Left lung (tissue), 14 donors: ENCODE measurements at regions of chr15 and their contacts with region 1.

Region 1: DNA sequence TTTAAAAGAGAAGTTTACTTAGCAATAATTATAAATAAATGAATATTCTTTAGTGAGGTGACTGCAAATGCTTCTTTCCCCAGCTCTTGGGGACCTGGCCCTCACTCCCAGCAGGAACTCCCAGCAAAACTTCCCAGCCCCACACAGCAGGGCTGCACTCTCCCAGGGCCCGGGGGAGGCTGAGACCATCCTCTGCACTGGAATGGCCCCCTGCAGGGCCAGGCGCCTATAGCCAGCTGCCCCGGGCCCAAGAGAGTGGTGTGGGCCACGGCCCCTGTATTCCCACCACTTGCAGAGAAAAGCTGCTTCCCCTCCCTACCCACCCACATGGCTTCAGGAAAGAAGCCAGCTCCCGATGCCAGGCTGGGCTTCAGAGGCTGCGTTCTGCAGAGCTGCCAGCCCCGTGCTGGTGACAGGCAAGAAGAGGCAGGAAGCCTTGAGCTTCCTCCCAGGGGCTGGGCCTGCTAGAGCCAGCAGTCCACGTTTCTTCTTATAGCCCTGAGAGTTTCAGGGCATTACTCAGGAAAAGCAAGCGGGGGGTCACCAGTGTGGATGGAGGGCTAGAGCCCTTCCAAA is 20.0 kb downstream of the IDH2 start:
- DNase-seq: no peak
- ATAC-seq: no peak
- H3K4me3 ChIP-seq: no peak overlapping the region
- H3K27ac ChIP-seq: peak overlapping the region in 1 of 2 donors; percentile 41
- H3K4me1 ChIP-seq: peaks cover 0 to 15% of the 10 kb centered on the region in 2 donors
- H3K27me3 ChIP-seq: no peaks in the 10 kb centered on the region
- CTCF ChIP-seq: no peak

Region 2: DNA sequence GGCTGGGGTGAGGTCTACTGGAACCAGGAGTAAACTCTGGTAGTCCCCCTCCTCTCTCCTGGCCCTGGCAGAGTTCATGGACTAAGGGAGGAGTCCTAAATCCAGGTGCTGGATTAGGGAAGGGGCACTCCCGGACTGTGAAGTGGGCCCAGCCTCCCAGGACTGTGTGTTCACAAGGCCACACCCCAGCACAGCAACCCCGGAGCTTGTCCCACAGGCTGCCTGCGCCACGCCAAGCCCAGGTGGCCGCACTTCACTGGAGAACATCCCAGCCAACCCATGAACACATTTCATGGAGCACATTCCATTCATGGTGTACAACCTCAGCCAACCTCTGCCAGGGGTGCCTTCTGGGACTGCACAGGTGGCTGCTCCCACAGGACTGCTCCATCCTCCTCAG is 177.7 kb before region 1 on chr15:
- intact Hi-C with region 1: loop called in 1 of 2 experiments (anchors 5 kb)
- DNase-seq: peak in 2 of 4 donors; percentile 55 to 85
- ATAC-seq: peak; percentile 82
- H3K4me3 ChIP-seq: no peak overlapping the region
- H3K27ac ChIP-seq: peak overlapping the region in 1 of 2 donors; percentile 37
- H3K4me1 ChIP-seq: peaks cover 0 to 9% of the 10 kb centered on the region in 2 donors
- H3K27me3 ChIP-seq: no peaks in the 10 kb centered on the region
- CTCF ChIP-seq: no peak

Region 3: GRCh38 chr15:90419738-90420406 is 337.6 kb after region 1 on chr15:
- intact Hi-C with region 1: no loop called
- DNase-seq: no peak
- ATAC-seq: peak; percentile 48
- H3K4me3 ChIP-seq: no peak overlapping the region
- H3K27ac ChIP-seq: peak overlapping the region; percentile 9 to 37
- H3K4me1 ChIP-seq: peaks cover 40 to 80% of the 10 kb centered on the region in 2 donors
- H3K27me3 ChIP-seq: no peaks in the 10 kb centered on the region
- CTCF ChIP-seq: no peak